Ovary (tissue), 10 donors: ENCODE measurements at regions of chr19 and their contacts with region 1.

Region 1: GRCh38 chr19:907183-907853 is 5.7 kb downstream of the R3HDM4 start:
- DNase-seq: no peak
- H3K4me3 ChIP-seq: no peak overlapping the region
- H3K27ac ChIP-seq: no peak overlapping the region
- H3K4me1 ChIP-seq: no peaks in the 10 kb centered on the region
- H3K27me3 ChIP-seq: no peaks in the 10 kb centered on the region
- CTCF ChIP-seq: no peak
- EP300 ChIP-seq: no peak
- POLR2A ChIP-seq: no peak

Region 2: GRCh38 chr19:858868-859843 is 48.2 kb before region 1 on chr19 and contains the start of gene CFD:
- intact Hi-C with region 1: no loop called
- DNase-seq: peak in 3 of 5 donors; percentile 50 to 72 (median 57)
- H3K4me3 ChIP-seq: peak within 1 kb of the TSS; percentile 25
- H3K27ac ChIP-seq: peak within 1 kb of the TSS; percentile 23 to 24
- H3K4me1 ChIP-seq: peaks cover 9% of the 10 kb centered on the region
- H3K27me3 ChIP-seq: peaks cover 4% of the 10 kb centered on the region
- CTCF ChIP-seq: no peak
- EP300 ChIP-seq: no peak
- POLR2A ChIP-seq: no peak
- total RNA-seq, gene CFD: 3.8 to 287 (median 25.3) TPM

Region 3: DNA sequence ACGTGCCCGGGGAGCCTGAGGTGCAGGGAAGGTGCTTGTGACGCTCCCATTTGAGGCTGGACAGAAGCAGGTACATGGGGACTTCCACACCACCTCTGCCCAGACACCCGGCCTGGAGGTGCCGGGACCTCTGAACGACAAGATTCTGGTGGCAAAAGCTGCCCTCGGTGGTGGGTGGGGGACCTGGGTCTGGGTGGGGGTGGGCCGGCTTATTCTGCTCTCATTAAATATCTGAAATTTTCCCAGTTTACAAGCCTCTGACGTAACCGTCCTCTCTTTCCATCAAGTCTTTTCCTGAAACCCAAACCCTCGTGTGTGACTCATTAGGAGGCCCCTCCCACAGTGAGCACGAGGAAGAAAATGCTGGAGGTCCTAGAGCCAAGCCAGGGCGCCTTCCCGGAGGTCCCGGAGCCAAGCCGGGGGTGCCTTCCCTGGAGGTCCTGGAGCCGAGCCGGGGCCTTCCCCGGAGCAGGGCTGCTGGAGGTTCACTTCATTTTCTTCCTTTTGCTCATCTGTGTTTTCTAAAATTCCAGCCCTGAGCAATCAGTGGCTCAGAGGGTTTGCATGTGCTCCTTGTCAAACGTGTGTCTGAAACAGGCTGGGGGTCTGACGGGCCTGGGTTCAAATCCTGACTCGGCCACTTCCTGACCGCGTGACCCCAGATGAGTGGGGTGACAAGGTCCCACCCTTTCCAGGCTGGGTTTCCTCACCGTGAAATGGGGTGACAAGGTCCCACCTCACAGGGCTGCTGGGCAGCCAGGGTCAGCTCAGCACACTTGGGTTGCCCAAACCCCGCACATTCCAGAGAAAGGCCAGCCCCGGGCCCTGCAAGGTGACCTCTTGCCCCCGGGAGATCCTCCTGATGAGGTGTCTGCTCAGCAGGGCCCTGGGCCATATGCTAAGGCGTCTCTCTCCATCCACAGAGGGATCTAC is 37.8 kb before region 1 on chr19:
- intact Hi-C with region 1: loop called in 1 of 4 experiments (anchors 5 kb)
- DNase-seq: peak; percentile 86 to 92 (median 87)
- H3K4me3 ChIP-seq: no peak overlapping the region
- H3K27ac ChIP-seq: peak overlapping the region; percentile 90 to 92
- H3K4me1 ChIP-seq: peaks cover 17% of the 10 kb centered on the region
- H3K27me3 ChIP-seq: no peaks in the 10 kb centered on the region
- CTCF ChIP-seq: no peak
- EP300 ChIP-seq: no peak
- POLR2A ChIP-seq: no peak

Region 4: GRCh38 chr19:984165-984967 is 77.0 kb after region 1 on chr19 and contains the start of gene WDR18:
- intact Hi-C with region 1: no loop called
- DNase-seq: peak; percentile 94 to 95 (median 94)
- H3K4me3 ChIP-seq: peak within 1 kb of the TSS; percentile 94
- H3K27ac ChIP-seq: peak within 1 kb of the TSS; percentile 13 to 80
- H3K4me1 ChIP-seq: peaks cover 1% of the 10 kb centered on the region
- H3K27me3 ChIP-seq: no peaks in the 10 kb centered on the region
- CTCF ChIP-seq: peak; percentile 26 to 70 (median 61)
- EP300 ChIP-seq: no peak
- POLR2A ChIP-seq: peak; percentile 57
- total RNA-seq, gene WDR18: 19.4 to 45.6 (median 31.2) TPM